ENCODE measurements at regions of chr17 and their contacts with region 1.

Region 1: GRCh38 chr17:43444223-43445008 is 39.4 kb upstream of the DHX8 start:
- DNase-seq: no peak
- H3K4me3 ChIP-seq: no peak overlapping the region
- H3K4me3 Mint-ChIP-seq: peak overlapping the region; percentile 7
- H3K27ac Mint-ChIP-seq: peak overlapping the region; percentile 32
- H3K4me1 ChIP-seq: peaks cover 20% of the 10 kb centered on the region
- H3K4me1 Mint-ChIP-seq: peaks cover 16% of the 10 kb centered on the region
- H3K27me3 ChIP-seq: no peaks in the 10 kb centered on the region
- H3K27me3 Mint-ChIP-seq: no peaks in the 10 kb centered on the region
- CTCF ChIP-seq: no peak

Region 2: DNA sequence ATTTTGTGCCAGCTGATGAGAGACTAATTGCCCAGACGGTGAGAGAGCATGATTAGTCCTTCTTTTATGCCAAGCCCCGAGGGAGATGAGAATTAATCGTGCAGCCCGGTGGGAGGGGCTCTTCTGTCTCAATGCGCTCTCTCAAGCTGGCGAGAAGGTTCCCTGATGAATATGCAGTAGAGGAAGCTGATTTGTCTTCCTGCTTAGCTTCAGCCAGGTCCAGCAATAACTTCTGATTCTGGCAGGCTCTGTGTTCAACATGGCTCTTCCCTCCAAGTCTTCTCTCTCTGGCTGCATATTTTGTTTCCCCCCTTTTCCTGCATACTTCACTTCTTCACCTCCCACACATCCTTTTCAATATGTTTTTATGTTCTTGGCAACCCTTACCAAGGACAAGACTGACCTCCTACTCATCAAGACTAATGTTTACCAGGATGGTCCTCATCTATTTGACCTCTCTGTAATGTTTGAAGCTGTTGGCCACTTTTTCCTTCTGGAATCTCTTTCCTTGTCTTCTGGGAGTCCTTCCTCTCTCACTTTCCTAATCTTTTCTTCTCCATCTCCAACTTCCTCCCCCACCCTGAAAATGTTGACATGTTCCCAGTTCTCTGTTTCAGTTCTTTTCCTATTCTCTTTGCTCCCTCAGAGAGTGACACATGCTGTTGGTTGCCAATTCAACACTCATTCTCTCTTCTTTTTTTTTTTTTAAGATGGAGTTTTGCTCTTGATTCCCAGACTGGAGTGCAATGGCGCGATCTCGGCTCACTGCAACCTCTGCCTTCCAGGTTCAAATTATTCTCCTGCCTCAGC is 12.5 kb before region 1 on chr17:
- CTCF ChIA-PET with region 1: no interaction called
- POLR2A ChIA-PET with region 1: interaction called, 3 read pairs
- intact Hi-C with region 1: loop called (anchors 2 kb)
- DNase-seq: no peak
- H3K4me3 ChIP-seq: no peak overlapping the region
- H3K4me3 Mint-ChIP-seq: no peak overlapping the region
- H3K27ac Mint-ChIP-seq: peak overlapping the region; percentile 16
- H3K4me1 ChIP-seq: peaks cover 42% of the 10 kb centered on the region
- H3K4me1 Mint-ChIP-seq: peaks cover 45% of the 10 kb centered on the region
- H3K27me3 ChIP-seq: no peaks in the 10 kb centered on the region
- H3K27me3 Mint-ChIP-seq: no peaks in the 10 kb centered on the region
- CTCF ChIP-seq: no peak

Region 3: DNA sequence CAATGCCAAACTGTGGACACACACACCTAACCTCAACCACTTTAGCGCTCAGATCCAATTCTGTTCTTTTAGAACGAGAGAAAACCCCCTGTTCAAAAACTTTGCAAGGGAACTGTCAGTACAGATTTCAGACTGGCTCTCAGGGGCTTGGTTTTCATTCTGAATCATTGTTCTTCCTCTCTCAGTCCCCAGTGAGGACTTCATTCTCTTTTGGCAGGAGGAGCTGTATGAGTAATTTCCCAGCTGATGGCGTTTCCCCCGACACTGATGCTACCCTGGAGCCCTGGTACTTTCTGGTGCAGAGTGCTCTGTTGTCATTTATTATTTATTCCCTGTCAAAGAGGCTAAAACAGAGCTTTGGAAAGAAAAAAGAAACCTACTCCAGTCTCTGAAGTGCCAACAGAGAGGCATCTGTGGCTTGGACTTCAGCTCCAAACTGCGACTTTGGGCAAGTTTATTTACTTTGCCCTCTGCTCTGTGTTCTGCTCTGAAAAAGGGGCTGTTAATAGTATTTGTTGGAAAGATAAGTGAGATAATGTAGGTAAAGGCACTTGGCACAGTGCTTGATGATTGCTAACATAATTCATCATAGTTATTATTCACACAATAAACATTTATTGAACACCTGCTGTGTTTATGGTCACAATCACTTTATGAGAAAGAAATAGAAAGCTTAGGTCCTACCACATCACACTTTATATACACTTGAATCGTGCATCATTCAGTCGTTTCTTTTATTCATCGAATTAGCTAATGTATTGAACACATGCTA is 73.4 kb after region 1 on chr17:
- CTCF ChIA-PET with region 1: no interaction called
- POLR2A ChIA-PET with region 1: no interaction called
- intact Hi-C with region 1: no loop called
- DNase-seq: no peak
- H3K4me3 ChIP-seq: no peak overlapping the region
- H3K4me3 Mint-ChIP-seq: no peak overlapping the region
- H3K27ac Mint-ChIP-seq: no peak overlapping the region
- H3K4me1 ChIP-seq: no peaks in the 10 kb centered on the region
- H3K4me1 Mint-ChIP-seq: no peaks in the 10 kb centered on the region
- H3K27me3 ChIP-seq: no peaks in the 10 kb centered on the region
- H3K27me3 Mint-ChIP-seq: no peaks in the 10 kb centered on the region
- CTCF ChIP-seq: no peak

Region 4: GRCh38 chr17:43634591-43635125 is 190.2 kb after region 1 on chr17:
- CTCF ChIA-PET with region 1: no interaction called
- POLR2A ChIA-PET with region 1: no interaction called
- intact Hi-C with region 1: no loop called
- DNase-seq: no peak
- H3K4me3 ChIP-seq: no peak overlapping the region
- H3K4me3 Mint-ChIP-seq: no peak overlapping the region
- H3K27ac Mint-ChIP-seq: no peak overlapping the region
- H3K4me1 ChIP-seq: peaks cover 47% of the 10 kb centered on the region
- H3K4me1 Mint-ChIP-seq: peaks cover 33% of the 10 kb centered on the region
- H3K27me3 ChIP-seq: no peaks in the 10 kb centered on the region
- H3K27me3 Mint-ChIP-seq: no peaks in the 10 kb centered on the region
- CTCF ChIP-seq: no peak

Measured in Caco-2 (cell line).